ENCODE measurements at regions of chr16 and their contacts with region 1.

Region 1: DNA sequence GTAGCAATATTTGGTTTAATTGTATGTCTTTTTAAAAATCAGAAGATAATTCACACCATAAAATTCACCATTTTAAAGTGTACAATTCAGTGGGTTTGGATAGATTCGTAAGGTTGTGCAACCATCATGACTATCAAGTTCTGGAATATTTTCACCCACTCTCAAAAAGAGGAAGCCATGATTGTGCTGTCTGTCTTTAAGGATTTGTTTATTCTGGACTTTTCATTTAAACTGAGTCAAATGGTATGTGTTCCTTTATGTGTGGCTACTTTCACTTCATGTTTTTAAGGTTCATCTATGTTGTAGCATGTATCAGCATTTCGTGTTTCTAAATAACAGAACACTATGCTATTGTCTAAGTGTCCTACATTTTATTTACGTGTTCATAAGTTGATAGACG is 68.1 kb upstream of the CPHXL start:
- DNase-seq: no peak
- ATAC-seq: no peak
- H3K4me3 ChIP-seq: no peak overlapping the region
- H3K27ac ChIP-seq: no peak overlapping the region
- H3K4me1 ChIP-seq: no peaks in the 10 kb centered on the region
- H3K27me3 ChIP-seq: no peaks in the 10 kb centered on the region
- CTCF ChIP-seq: no peak

Region 2: GRCh38 chr16:76653390-76654026 is 859.1 kb after region 1 on chr16:
- intact Hi-C with region 1: loop called in 1 of 10 experiments (anchors 10 kb)
- DNase-seq: no peak
- ATAC-seq: no peak
- H3K4me3 ChIP-seq: no peak overlapping the region
- H3K27ac ChIP-seq: no peak overlapping the region
- H3K4me1 ChIP-seq: no peaks in the 10 kb centered on the region
- H3K27me3 ChIP-seq: peaks cover 0 to 5% (median 0%) of the 10 kb centered on the region in 7 donors
- CTCF ChIP-seq: peak in 7 of 9 donors; percentile 22 to 49 (median 44)